HCT116 (cell line): ENCODE measurements at regions of chr1 and their contacts with region 1.

Region 1: DNA sequence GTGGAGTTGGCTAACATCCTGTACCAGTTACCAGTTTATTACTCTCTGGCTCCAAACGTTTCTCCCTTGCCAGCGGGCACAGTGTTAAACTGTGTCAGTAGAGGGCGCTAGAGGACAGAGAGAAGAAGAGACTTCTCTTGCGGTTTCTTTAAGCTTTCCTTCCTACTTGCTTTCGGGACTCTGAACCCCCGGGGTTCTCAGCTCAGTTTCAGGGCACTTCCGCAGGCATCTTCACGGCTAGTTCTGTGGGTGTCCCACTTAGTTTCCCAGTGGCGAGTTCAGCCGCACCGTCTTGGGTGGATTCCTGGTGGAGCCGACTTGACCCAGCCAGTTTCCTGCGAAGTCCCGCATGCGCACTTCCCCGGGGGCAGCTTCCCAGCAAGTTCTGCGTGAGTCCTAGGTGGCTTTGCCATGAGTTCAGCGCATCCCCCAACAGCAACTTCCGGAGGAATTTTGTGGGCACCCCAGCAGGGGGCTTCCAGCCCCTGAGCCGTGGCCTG is 37.9 kb upstream of the BTG2 start:
- DNase-seq: peak; percentile 77
- ATAC-seq: peak; percentile 70
- H3K4me3 ChIP-seq: peak overlapping the region; percentile 39 to 46
- H3K27ac ChIP-seq: peak overlapping the region; percentile 49
- H3K4me1 ChIP-seq: peaks cover 0 to 20% of the 10 kb centered on the region in 2 experiments; a peak in 2 of 4 replicates
- H3K27me3 ChIP-seq: no peaks in the 10 kb centered on the region
- CTCF ChIP-seq: peak; percentile 87 to 93 (median 90)
- POLR2A ChIP-seq: peak; percentile 30
- RAD21 ChIP-seq: peak; percentile 82

Region 2: GRCh38 chr1:203026031-203026989 is 241.1 kb before region 1 on chr1 and contains the start of gene PPFIA4:
- CTCF ChIA-PET with region 1: interaction called, 51 read pairs
- POLR2A ChIA-PET with region 1: no interaction called
- RAD21 ChIA-PET with region 1: no interaction called
- intact Hi-C with region 1: loop called (anchors 2 kb)
- DNase-seq: peak; percentile 46
- ATAC-seq: peak; percentile 91
- H3K4me3 ChIP-seq: peak within 1 kb of the TSS; percentile 49 to 69
- H3K27ac ChIP-seq: peak within 1 kb of the TSS; percentile 41; the same call in 1 of the 2 replicates
- H3K4me1 ChIP-seq: peaks cover 4 to 15% of the 10 kb centered on the region in 2 experiments; a peak in 2 of 4 replicates
- H3K27me3 ChIP-seq: no peaks in the 10 kb centered on the region
- CTCF ChIP-seq: no peak
- POLR2A ChIP-seq: peak; percentile 73
- RAD21 ChIP-seq: no peak
- total RNA-seq, gene PPFIA4: 10.8 TPM

Region 3: GRCh38 chr1:203046984-203047630 is 220.3 kb before region 1 on chr1:
- CTCF ChIA-PET with region 1: interaction called, 15 read pairs
- POLR2A ChIA-PET with region 1: interaction called, 10 read pairs
- RAD21 ChIA-PET with region 1: interaction called in 1 of 2 experiments, 3 read pairs
- intact Hi-C with region 1: no loop called
- DNase-seq: no peak
- ATAC-seq: peak; percentile 77
- H3K4me3 ChIP-seq: no peak overlapping the region
- H3K27ac ChIP-seq: no peak overlapping the region
- H3K4me1 ChIP-seq: peaks cover 8 to 20% of the 10 kb centered on the region in 2 experiments
- H3K27me3 ChIP-seq: no peaks in the 10 kb centered on the region
- CTCF ChIP-seq: no peak
- POLR2A ChIP-seq: no peak
- RAD21 ChIP-seq: no peak

Region 4: GRCh38 chr1:203127666-203128430 is 139.5 kb before region 1 on chr1 and contains the start of gene ADORA1:
- CTCF ChIA-PET with region 1: interaction called, 10 read pairs
- POLR2A ChIA-PET with region 1: no interaction called
- RAD21 ChIA-PET with region 1: no interaction called
- intact Hi-C with region 1: no loop called
- DNase-seq: peak; percentile 10
- ATAC-seq: peak; percentile 92
- H3K4me3 ChIP-seq: peak within 1 kb of the TSS; percentile 56 to 64
- H3K27ac ChIP-seq: no peak within 1 kb of the TSS; the same call in 1 of the 2 replicates
- H3K4me1 ChIP-seq: peaks cover 25 to 58% of the 10 kb centered on the region in 2 experiments; a peak in 3 of 4 replicates
- H3K27me3 ChIP-seq: peaks cover 7% of the 10 kb centered on the region; the same call in 1 of the 2 replicates
- CTCF ChIP-seq: 0 out of 6 replicates have a peak, but pooled peaks of 1 of the 3 experiments have one; percentile 14
- POLR2A ChIP-seq: no peak
- RAD21 ChIP-seq: no peak
- total RNA-seq, gene ADORA1: 2.8 TPM

Region 5: GRCh38 chr1:203252678-203253077 is 14.7 kb before region 1 on chr1:
- CTCF ChIA-PET with region 1: interaction called, 11 read pairs
- POLR2A ChIA-PET with region 1: interaction called, 3 read pairs
- RAD21 ChIA-PET with region 1: no interaction called
- intact Hi-C with region 1: no loop called
- DNase-seq: no peak
- ATAC-seq: no peak
- H3K4me3 ChIP-seq: no peak overlapping the region
- H3K27ac ChIP-seq: no peak overlapping the region
- H3K4me1 ChIP-seq: peaks cover 0 to 7% of the 10 kb centered on the region in 2 experiments; a peak in 1 of 4 replicates
- H3K27me3 ChIP-seq: no peaks in the 10 kb centered on the region
- CTCF ChIP-seq: no peak
- POLR2A ChIP-seq: no peak
- RAD21 ChIP-seq: no peak

Region 6: DNA sequence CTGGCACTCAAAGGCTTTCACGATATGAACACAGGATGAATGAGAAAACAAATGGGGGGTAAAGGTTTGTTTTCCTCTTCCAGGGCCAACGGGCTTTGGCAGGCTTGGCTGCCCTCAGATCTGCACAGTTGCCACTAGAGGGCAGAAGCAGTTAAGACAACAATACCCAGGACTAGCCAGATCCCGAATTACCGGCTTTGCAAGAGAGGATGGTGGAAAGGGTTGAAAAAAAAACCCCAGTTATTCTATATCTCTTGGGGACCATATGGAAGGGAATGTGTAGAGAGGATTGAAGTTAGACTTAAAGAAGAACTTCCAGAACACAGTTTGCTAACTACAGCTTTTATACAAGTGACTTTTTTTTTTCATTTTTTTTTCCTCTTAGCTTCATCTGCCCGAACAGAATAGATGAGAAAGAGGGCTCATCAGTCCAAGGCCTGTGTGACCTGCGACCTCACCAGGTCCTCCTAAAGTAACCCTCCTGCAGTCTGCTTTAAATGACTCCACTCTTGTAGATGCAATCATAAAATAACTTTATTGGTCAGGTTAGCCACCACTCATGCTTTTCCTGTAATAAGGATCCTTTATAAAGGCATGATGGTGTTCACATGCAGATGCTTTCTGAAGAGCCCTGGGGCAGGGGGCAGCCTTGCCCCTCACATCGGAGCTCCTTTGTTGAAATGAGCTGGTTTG is 72.9 kb after region 1 on chr1:
- CTCF ChIA-PET with region 1: interaction called, 45 read pairs
- POLR2A ChIA-PET with region 1: no interaction called
- RAD21 ChIA-PET with region 1: no interaction called
- intact Hi-C with region 1: no loop called
- DNase-seq: peak; percentile 76
- ATAC-seq: peak; percentile 76
- H3K4me3 ChIP-seq: no peak overlapping the region
- H3K27ac ChIP-seq: no peak overlapping the region
- H3K4me1 ChIP-seq: peaks cover 0 to 6% of the 10 kb centered on the region in 2 experiments; a peak in 2 of 4 replicates
- H3K27me3 ChIP-seq: peaks cover 15% of the 10 kb centered on the region; the same call in 1 of the 2 replicates
- CTCF ChIP-seq: peak; percentile 88 to 96 (median 94)
- POLR2A ChIP-seq: no peak
- RAD21 ChIP-seq: peak; percentile 95